Activated CD8-positive, alpha-beta T cell treated with anti-CD3 and anti-CD28 coated beads for 36 hours (primary cell): ENCODE measurements at regions of chr13 and their contacts with region 1.

Region 1: DNA sequence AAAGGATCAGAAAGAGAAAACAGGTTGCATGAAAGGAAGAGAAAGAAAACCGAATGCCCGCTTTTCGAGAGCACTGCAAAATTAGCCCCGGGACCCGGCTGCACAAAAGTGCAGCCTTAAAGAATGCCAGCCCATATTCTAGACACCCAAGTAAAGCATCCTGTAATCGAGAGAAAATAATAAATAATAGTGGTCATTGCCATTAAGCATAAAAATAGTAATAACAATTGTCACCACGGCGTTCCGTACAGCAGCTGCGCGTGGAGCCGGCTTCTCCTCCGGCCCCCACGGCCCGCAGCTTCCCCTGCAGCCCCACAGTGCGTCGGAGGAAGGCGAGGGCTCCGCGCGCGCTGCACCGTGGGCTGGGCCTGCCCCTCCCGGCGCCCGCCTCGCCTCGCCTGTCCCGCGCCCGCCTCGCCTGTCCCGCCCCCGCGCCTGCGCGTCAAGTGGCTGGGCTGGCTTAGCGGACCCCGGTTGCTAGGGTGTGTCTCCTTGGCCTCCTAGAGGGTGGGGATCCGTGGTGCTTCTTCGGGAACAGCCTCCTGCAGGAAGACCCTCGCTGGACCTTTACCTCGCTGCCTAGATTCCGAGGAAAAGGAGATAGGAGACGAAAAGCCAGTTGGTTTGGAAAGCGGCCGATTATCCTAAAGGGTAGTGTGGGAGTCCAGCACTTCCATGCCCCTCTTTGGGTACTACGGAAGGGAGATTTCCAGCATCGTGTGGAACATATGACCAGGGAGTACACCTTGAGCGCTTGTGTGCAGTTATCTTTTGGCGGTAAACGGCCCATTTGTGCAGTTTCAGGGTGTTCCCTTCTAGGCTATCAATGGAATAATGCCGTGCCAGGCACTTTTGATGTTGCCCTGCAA is at the start of gene LRRC63:
- DNase-seq: peak; percentile 89
- ATAC-seq: peak; percentile 98
- H3K4me3 Mint-ChIP-seq: peak within 1 kb of the TSS; percentile 79
- H3K27ac Mint-ChIP-seq: peak within 1 kb of the TSS; percentile 91
- H3K4me1 Mint-ChIP-seq: peaks cover 24% of the 10 kb centered on the region
- H3K27me3 Mint-ChIP-seq: no peaks in the 10 kb centered on the region
- CTCF ChIP-seq: no peak
- total RNA-seq, gene LRRC63: 0.47 to 0.59 TPM

Region 2: GRCh38 chr13:46176756-46177155 is 35.0 kb before region 1 on chr13:
- CTCF ChIA-PET with region 1: no interaction called
- POLR2A ChIA-PET with region 1: interaction called, 6 read pairs
- intact Hi-C with region 1: loop called (anchors 5 kb)
- DNase-seq: no peak
- ATAC-seq: no peak
- H3K4me3 Mint-ChIP-seq: peak overlapping the region; percentile 99
- H3K27ac Mint-ChIP-seq: peak overlapping the region; percentile 99
- H3K4me1 Mint-ChIP-seq: peaks cover 60% of the 10 kb centered on the region
- H3K27me3 Mint-ChIP-seq: peaks cover 3% of the 10 kb centered on the region
- CTCF ChIP-seq: no peak